Heart right ventricle (tissue), 16 donors: ENCODE measurements at regions of chr22 and their contacts with region 1.

Region 1: DNA sequence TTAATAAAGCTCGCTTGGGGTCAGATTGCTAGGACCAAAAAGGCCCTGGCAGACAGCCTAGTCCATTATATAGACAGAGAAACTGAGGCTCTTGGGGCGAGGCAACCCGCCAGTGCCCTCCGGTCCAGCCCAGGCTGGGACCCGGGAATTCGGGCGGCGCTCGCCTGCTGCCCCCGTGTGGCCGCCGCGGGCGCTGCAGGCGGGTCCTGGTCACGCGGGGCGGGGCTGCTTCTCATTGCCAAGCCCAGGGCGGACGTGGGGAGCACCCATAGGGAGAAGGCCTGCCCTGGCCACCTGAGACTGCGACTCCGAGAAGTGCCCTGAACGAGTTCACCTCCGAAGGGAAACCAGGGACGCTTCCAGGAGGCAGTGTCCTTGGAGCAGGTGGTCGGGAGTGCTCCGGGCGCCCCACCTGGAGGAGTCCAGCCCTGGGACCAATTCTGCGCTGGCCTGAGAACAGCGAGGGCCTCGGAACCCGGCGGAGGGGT is 36.0 kb upstream of the CSNK1E start:
- DNase-seq: peak; percentile 47 to 80
- ATAC-seq: peak; percentile 67 to 83 (median 80)
- H3K4me3 ChIP-seq: no peak overlapping the region
- H3K27ac ChIP-seq: peak overlapping the region in 5 of 10 donors; percentile 3 to 55 (median 35)
- H3K4me1 ChIP-seq: peaks cover 0 to 17% (median 5%) of the 10 kb centered on the region in 9 donors
- H3K27me3 ChIP-seq: peaks cover 0 to 11% (median 0%) of the 10 kb centered on the region in 7 donors
- CTCF ChIP-seq: peak; percentile 98 to 100 (median 99)

Region 2: DNA sequence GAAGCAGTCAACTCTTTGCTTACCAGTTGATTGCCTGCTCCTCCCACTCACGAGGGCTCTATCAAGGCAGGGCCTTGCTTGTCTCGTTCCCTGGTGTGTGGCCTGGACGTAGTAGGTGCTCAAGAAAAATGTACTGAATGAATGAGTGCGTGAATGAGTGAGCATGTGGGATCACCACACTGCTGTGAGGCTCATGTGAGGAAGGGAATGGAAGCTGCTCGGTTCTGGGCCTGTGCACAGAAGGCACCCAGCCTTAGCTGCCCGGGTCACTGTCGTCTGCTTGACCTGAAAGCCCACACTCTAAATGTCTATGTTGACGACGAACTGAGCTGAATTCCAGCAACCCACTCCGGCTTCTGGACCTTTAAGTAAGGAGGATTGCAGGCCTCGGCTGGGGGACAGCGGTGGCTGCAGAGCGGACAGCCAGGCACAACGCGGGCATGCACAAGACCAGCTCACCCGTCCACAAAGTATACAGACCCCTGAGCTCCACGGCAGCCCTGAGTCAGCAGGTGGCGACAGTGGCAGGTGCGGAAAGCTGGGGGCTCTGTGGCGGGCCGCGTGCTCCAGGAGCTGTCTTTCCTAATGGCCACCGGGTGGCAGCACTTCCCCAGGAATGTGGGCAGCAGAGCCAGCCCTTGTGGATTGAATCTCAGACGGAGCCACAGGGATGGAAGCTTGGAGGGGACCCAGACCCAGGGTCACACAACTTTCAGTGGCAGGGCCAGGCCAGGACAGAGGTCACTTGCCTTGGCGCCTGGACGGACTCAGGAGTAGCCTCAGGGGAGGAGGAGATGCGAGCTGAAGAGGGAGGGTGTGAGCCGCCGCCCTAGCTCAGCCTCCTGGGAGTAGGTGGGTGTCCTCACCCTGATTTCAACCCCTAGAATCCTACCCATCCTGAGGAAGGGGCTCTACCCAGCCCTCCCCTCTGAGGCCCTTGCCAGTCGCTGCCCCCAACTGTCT is 301.0 kb before region 1 on chr22:
- intact Hi-C with region 1: loop called in 8 of 10 experiments (anchors 1 to 10 kb)
- DNase-seq: peak; percentile 71 to 78
- ATAC-seq: peak; percentile 67 to 82 (median 75)
- H3K4me3 ChIP-seq: peak overlapping the region in 1 of 10 donors; percentile 9
- H3K27ac ChIP-seq: no peak overlapping the region
- H3K4me1 ChIP-seq: peaks cover 0 to 15% (median 11%) of the 10 kb centered on the region in 9 donors
- H3K27me3 ChIP-seq: peaks cover 0 to 6% (median 0%) of the 10 kb centered on the region in 7 donors
- CTCF ChIP-seq: peak; percentile 75 to 95 (median 91)

Region 3: DNA sequence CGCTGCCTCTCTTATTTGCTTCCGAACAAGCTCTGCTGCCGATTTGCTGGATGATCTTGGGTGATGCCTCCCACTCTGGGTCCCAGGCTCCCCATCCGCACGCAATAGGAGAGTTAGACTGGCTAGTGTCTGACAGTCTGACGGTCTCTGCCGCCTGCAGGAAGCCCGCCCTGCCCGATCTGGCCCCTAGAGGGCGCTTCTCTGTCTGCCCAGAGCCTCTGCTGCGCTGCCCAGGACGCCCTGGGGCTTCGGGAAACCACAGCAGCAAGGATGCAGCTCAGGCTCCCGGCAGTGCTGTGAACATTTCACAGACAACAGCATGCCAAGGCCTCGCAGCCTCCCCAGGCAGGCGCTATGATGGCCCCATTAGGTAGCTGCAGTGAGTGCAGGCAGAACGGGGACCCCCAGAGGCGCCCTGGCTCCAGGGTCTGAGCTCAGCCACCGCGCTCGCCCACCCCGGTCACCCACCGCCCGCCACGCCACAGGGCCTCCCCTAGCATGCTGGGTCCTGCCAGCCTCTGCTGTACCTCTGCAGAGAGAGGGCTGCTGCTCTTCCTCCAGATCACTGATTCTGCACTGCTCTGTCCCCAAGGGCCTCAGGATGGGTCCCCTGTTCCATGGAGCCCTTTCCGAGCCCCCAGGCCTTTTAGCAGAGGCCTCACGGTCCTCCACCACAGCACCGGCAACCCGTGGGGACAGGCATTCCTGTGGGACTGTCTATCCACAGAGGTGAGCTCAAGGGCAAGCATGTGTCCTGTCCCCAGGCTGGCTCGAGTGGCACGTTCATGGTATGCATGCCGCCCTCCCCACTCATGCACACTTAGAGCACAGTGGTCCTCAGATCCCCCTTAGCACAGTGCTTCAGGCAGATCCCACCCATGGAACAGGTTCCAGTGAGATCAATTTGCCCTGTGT is 238.4 kb before region 1 on chr22:
- intact Hi-C with region 1: loop called in 7 of 10 experiments (anchors 5 to 10 kb)
- DNase-seq: peak; percentile 83 to 89
- ATAC-seq: peak; percentile 87 to 98 (median 94)
- H3K4me3 ChIP-seq: no peak overlapping the region
- H3K27ac ChIP-seq: no peak overlapping the region
- H3K4me1 ChIP-seq: peaks cover 0 to 12% (median 8%) of the 10 kb centered on the region in 9 donors
- H3K27me3 ChIP-seq: no peaks in the 10 kb centered on the region
- CTCF ChIP-seq: peak; percentile 87 to 98 (median 95)

Region 4: GRCh38 chr22:38262051-38262795 is 91.0 kb before region 1 on chr22:
- intact Hi-C with region 1: loop called in 1 of 10 experiments (anchors 10 kb)
- DNase-seq: peak in 1 of 2 donors; percentile 69
- ATAC-seq: peak; percentile 31 to 55 (median 44)
- H3K4me3 ChIP-seq: no peak overlapping the region
- H3K27ac ChIP-seq: peak overlapping the region; percentile 21 to 93 (median 80)
- H3K4me1 ChIP-seq: peaks cover 33 to 96% (median 87%) of the 10 kb centered on the region in 9 donors
- H3K27me3 ChIP-seq: no peaks in the 10 kb centered on the region
- CTCF ChIP-seq: peak; percentile 39 to 75 (median 63)

Region 5: GRCh38 chr22:38298312-38299000 is 54.7 kb before region 1 on chr22:
- intact Hi-C with region 1: loop called in 1 of 10 experiments (anchors 2 kb)
- DNase-seq: no peak
- ATAC-seq: peak in 3 of 8 donors; percentile 8 to 29 (median 25)
- H3K4me3 ChIP-seq: no peak overlapping the region
- H3K27ac ChIP-seq: no peak overlapping the region
- H3K4me1 ChIP-seq: peaks cover 3 to 43% (median 14%) of the 10 kb centered on the region in 9 donors
- H3K27me3 ChIP-seq: no peaks in the 10 kb centered on the region
- CTCF ChIP-seq: peak in 7 of 9 donors; percentile 21 to 56 (median 41)

Region 6: DNA sequence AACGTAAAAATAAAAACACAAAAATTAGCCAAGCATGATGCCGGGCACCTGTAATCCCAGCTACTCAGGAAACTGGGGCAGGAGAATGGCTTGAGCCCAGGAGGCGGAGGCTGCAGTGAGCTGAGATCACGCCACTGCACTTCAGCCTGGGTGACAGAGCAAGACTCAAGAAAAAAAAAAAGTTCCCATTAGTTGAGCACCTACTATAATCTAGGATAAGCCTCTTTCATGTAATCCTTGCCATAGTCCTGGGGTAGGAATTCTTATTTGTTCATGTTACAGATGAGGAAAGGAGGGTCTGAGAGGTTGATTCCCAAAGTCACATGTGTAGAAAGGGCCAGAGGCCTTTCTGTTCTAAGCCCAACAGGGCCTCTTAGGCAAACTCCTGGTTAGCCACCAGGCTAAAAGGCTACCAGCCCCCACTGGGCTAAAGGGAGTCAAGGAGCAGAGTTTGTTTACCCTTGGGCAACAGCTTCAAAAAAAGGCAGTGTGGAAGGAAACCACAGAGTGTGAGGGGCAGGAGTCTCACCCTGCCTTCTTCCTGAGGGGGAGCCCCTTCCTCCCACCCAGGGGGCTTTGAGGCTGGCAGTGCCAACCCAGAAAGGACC is 14.3 kb before region 1 on chr22:
- intact Hi-C with region 1: loop called in 1 of 10 experiments (anchors 1 kb)
- DNase-seq: no peak
- ATAC-seq: no peak
- H3K4me3 ChIP-seq: no peak overlapping the region
- H3K27ac ChIP-seq: no peak overlapping the region
- H3K4me1 ChIP-seq: peaks cover 0 to 13% (median 9%) of the 10 kb centered on the region in 9 donors
- H3K27me3 ChIP-seq: peaks cover 0 to 40% (median 0%) of the 10 kb centered on the region in 7 donors
- CTCF ChIP-seq: no peak

Region 7: DNA sequence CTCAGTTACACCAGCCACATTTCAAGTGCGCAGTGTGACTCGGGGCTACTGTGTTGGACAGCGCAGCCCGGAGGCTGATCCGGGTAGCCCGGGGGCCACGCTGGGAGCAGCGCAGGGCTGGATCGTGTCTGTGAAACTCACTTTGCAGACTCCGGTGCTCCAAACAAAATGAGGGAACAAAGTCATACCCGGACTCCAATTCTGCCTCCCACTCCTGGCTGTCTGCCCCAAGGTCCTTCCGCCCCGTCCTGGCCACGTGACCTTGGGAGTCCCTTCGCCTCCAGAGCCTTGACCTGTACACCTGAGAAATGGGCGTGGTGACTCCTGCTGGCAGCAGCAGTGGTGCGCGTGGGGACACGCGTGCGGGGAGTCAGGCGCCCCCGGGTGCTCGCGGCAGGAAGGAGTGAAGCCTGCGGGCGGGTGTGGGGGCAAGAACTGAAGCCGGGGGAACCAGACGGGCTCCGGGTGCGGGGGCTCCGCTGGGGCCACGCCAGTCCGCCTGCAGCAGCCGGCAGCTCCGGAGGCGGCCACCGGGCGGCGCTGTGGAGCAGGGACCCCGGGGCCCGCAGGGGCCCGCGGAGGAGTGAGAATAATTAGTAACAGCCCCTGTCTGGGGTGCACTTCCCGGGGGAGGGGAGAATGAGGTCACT is 59.4 kb after region 1 on chr22:
- intact Hi-C with region 1: no loop called
- DNase-seq: peak in 1 of 2 donors; percentile 45
- ATAC-seq: peak in 6 of 8 donors; percentile 31 to 54 (median 42)
- H3K4me3 ChIP-seq: peak overlapping the region in 9 of 10 donors; percentile 15 to 44 (median 37)
- H3K27ac ChIP-seq: peak overlapping the region in 8 of 10 donors; percentile 8 to 81 (median 68)
- H3K4me1 ChIP-seq: peaks cover 7 to 32% (median 15%) of the 10 kb centered on the region in 9 donors
- H3K27me3 ChIP-seq: peaks cover 0 to 6% (median 0%) of the 10 kb centered on the region in 7 donors
- CTCF ChIP-seq: peak; percentile 75 to 88 (median 85)